ENCODE measurements at regions of chr22 and their contacts with region 1.

Region 1: DNA sequence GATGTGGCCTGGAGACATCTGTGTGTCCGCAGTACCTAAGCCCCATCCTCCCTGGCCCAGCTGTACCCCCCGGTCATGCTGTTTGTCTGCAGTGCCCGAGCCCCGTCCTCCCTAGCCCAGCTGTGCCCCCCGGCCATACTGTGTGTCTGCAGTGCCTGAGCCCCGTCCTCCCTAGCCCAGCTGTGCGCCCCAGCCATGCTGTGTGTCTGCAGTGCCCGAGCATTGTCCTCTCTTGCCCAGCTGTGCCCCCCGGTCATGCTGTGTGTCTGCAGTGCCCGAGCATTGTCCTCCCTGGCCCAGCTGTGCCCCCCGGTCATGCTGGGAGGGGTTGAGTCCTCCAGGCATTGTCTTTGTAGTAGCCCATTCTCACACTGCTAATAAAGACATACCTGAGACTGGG is 7.6 kb upstream of the ARSA start:
- DNase-seq: no peak
- ATAC-seq: no peak
- H3K4me3 ChIP-seq: no peak overlapping the region
- H3K27ac ChIP-seq: no peak overlapping the region
- H3K4me1 ChIP-seq: peaks cover 0 to 4% (median 0%) of the 10 kb centered on the region in 9 donors
- H3K27me3 ChIP-seq: no peaks in the 10 kb centered on the region
- CTCF ChIP-seq: no peak

Region 2: GRCh38 chr22:50582562-50583293 is 52.9 kb before region 1 on chr22 and contains the start of gene CHKB:
- intact Hi-C with region 1: no loop called
- DNase-seq: peak; percentile 99
- ATAC-seq: peak; percentile 94 to 98 (median 97)
- H3K4me3 ChIP-seq: peak within 1 kb of the TSS; percentile 58 to 88 (median 78)
- H3K27ac ChIP-seq: peak within 1 kb of the TSS; percentile 96 to 100 (median 97)
- H3K4me1 ChIP-seq: peaks cover 5 to 48% (median 37%) of the 10 kb centered on the region in 9 donors
- H3K27me3 ChIP-seq: no peaks in the 10 kb centered on the region
- CTCF ChIP-seq: peak in 1 of 9 donors; percentile 43
- total RNA-seq, gene CHKB: 31.7 to 60.1 (median 39.9) TPM

Region 3: DNA sequence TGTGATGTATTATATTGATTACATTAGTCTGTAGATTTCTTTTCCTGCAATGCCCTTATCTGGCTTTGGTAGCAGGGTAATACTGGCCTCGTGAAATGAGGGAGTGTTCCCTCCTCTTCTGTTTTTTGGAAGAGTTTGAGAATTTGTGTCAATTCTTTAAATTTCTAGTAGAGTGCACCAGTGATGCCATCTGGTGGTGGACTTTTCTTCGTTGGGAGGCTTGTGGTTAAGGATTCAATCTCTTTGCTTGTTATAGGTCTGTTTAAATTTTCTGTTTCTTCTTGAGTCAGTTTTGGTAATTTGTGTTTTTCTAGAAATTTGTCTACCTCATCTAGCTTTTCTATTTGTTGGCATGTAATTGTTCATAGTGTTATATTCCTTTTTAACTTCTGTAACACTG is 55.9 kb after region 1 on chr22:
- intact Hi-C with region 1: loop called in 2 of 10 experiments (anchors 5 kb)
- DNase-seq: peak in 1 of 2 donors; percentile 4
- ATAC-seq: no peak
- H3K4me3 ChIP-seq: no peak overlapping the region
- H3K27ac ChIP-seq: peak overlapping the region in 1 of 10 donors; percentile 15
- H3K4me1 ChIP-seq: peaks cover 2 to 88% (median 35%) of the 10 kb centered on the region in 9 donors
- H3K27me3 ChIP-seq: peaks cover 0 to 17% (median 0%) of the 10 kb centered on the region in 7 donors
- CTCF ChIP-seq: peak in 7 of 9 donors; percentile 29 to 57 (median 37)

Region 4: DNA sequence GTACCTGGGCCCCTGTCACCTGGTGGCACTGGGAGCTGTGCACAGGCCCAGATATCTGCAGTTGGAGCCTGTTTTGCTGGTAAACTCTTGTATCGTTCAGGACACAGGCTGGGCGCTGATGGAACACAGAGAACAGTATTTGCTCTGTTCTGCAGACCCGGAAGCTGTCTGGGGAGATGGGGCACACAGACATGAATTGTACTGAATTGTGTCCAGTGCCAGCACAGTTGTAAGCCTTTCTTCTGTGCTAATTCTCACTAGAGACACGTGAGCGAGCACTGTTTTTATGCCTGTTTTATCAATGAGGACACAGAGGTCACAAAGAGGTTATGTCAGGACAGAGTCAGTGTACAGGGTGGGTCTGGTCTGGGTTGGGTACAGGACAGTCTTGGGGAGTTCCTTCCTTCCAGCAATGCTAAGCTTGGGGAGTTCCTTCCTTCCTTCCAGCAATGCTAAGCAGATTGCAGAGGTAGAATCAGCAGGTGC is 78.0 kb after region 1 on chr22:
- intact Hi-C with region 1: loop called in 1 of 10 experiments (anchors 5 kb)
- DNase-seq: no peak
- ATAC-seq: peak; percentile 19 to 83 (median 56)
- H3K4me3 ChIP-seq: no peak overlapping the region
- H3K27ac ChIP-seq: peak overlapping the region in 5 of 10 donors; percentile 42 to 74 (median 48)
- H3K4me1 ChIP-seq: peaks cover 3 to 61% (median 38%) of the 10 kb centered on the region in 9 donors
- H3K27me3 ChIP-seq: no peaks in the 10 kb centered on the region
- CTCF ChIP-seq: no peak